Naive thymus-derived CD4-positive, alpha-beta T cell (primary cell): ENCODE measurements at regions of chr3 and their contacts with region 1.

Region 1: DNA sequence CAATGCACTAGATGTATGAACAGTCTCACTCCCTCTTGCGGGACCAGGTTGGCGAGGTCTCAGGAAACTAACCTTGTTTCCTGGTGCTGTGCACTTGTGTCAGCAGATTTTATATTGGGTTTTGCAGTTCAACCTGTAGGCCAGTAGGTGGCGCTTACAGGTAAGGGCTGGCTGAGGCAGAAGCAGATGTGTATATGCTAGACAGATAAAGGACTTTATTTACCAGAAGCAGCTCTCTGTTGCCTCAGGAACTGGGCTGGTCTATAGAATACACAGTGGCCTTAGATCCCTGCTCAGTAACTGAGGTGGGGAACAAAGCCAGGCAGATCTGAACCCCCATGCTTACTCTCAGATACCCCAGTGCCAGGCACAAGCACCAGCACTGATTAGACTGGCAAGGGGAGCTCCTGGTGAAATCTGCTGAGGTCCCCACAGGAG is 296.8 kb downstream of the DOCK3 start:
- DNase-seq: peak in 8 of 9 donors; percentile 37 to 83 (median 78)
- ATAC-seq: peak; percentile 99
- H3K4me3 ChIP-seq: no peak overlapping the region
- H3K4me3 Mint-ChIP-seq: peak overlapping the region in 2 of 10 donors; percentile 15 to 45
- H3K27ac ChIP-seq: no peak overlapping the region
- H3K27ac Mint-ChIP-seq: peak overlapping the region in 7 of 9 donors; percentile 12 to 77 (median 67)
- H3K4me1 ChIP-seq: peaks cover 9 to 14% of the 10 kb centered on the region in 2 donors
- H3K4me1 Mint-ChIP-seq: peaks cover 0 to 21% (median 13%) of the 10 kb centered on the region in 7 donors
- H3K27me3 ChIP-seq: no peaks in the 10 kb centered on the region
- H3K27me3 Mint-ChIP-seq: peaks cover 0 to 3% (median 0%) of the 10 kb centered on the region in 5 donors

Region 2: DNA sequence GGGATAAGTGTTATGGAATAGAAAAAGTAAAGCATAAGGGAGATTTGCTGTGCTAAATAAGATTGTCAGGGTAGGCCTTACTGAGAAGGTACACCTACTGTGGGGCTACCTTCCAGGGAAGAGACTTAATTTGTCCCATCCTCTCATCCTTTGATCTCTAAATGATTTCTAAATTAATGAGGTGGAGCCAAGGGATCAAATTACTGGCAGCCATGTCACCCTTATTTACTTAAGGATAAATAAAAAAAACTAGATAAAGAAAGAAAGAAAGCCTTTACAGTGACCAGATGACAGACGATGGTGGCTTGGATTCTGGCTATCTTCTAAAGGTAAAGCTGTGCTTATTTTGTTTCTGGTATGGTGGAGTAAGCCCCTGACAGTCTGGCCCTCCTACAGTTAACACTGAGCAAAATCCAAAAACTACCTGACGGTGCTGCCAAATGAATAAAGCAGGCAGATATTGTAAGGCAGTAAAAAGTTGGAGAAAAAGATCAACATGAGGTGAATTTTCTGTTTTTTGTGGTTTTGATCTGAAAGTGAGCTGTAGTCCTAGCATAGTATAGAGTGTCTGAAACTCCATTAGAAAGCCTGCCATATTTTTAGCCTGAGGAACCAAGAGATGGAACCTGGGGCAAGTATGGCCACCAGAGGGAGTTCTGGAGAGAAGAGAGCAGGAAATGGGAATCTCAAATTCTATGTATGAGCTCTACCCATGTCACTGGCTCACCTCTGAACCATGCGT is 128.5 kb after region 1 on chr3:
- CTCF ChIA-PET with region 1: interaction called, 8 read pairs
- POLR2A ChIA-PET with region 1: interaction called, 3 read pairs
- intact Hi-C with region 1: loop called in 1 of 2 experiments (anchors 2 kb)
- DNase-seq: peak in 1 of 9 donors; percentile 5
- ATAC-seq: peak; percentile 20
- H3K4me3 ChIP-seq: no peak overlapping the region
- H3K4me3 Mint-ChIP-seq: peak overlapping the region in 1 of 10 donors; percentile 43
- H3K27ac ChIP-seq: no peak overlapping the region
- H3K27ac Mint-ChIP-seq: peak overlapping the region in 3 of 9 donors; percentile 45 to 82 (median 75)
- H3K4me1 ChIP-seq: no peaks in the 10 kb centered on the region
- H3K4me1 Mint-ChIP-seq: peaks cover 3 to 27% (median 16%) of the 10 kb centered on the region in 7 donors
- H3K27me3 ChIP-seq: no peaks in the 10 kb centered on the region
- H3K27me3 Mint-ChIP-seq: peaks cover 0 to 2% (median 0%) of the 10 kb centered on the region in 5 donors

Region 3: DNA sequence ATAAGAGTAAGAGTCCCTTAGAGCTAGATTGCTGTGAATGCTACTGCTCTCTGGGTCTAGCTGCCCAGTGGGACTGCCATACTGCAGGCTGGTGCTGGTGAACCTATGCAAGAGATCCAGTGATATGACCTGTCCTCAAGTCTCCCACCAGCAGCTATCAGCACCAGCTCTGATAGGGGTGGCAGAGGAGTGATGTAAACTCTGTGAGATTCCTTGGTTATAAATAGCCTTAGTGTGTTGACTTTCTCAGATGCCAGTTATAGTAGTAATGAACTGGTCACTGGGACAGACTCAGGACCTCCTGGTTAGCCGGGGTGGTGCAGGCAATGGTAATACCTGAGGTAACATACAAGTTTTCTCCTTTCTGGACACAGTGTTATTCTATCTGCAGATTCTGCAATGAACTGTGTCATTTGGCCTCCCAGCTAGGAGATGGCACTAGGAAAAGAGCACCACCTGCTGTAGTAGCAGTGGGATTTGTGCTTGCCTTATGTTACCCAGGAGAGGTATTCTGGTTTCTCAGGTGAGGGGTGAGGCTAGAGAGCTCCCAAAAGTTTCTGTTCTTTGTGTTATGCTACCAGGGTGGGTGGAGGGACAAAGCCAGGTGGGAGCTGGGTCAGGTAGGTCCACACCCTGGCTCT is 218.8 kb after region 1 on chr3:
- CTCF ChIA-PET with region 1: interaction called, 13 read pairs
- POLR2A ChIA-PET with region 1: no interaction called
- intact Hi-C with region 1: loop called in 1 of 2 experiments (anchors 2 kb)
- DNase-seq: peak in 4 of 9 donors; percentile 5 to 23 (median 8)
- ATAC-seq: no peak
- H3K4me3 ChIP-seq: no peak overlapping the region
- H3K4me3 Mint-ChIP-seq: no peak overlapping the region
- H3K27ac ChIP-seq: no peak overlapping the region
- H3K27ac Mint-ChIP-seq: peak overlapping the region in 1 of 9 donors; percentile 30
- H3K4me1 ChIP-seq: no peaks in the 10 kb centered on the region
- H3K4me1 Mint-ChIP-seq: peaks cover 6 to 45% (median 13%) of the 10 kb centered on the region in 7 donors
- H3K27me3 ChIP-seq: no peaks in the 10 kb centered on the region
- H3K27me3 Mint-ChIP-seq: peaks cover 0 to 3% (median 0%) of the 10 kb centered on the region in 5 donors

Region 4: GRCh38 chr3:51311055-51311454 is 339.5 kb after region 1 on chr3:
- CTCF ChIA-PET with region 1: interaction called, 23 read pairs
- POLR2A ChIA-PET with region 1: no interaction called
- intact Hi-C with region 1: loop called in 1 of 2 experiments (anchors 2 kb)
- DNase-seq: peak in 7 of 9 donors; percentile 4 to 53 (median 39)
- ATAC-seq: peak; percentile 32
- H3K4me3 ChIP-seq: no peak overlapping the region
- H3K4me3 Mint-ChIP-seq: no peak overlapping the region
- H3K27ac ChIP-seq: no peak overlapping the region
- H3K27ac Mint-ChIP-seq: no peak overlapping the region
- H3K4me1 ChIP-seq: no peaks in the 10 kb centered on the region
- H3K4me1 Mint-ChIP-seq: peaks cover 0 to 10% (median 0%) of the 10 kb centered on the region in 7 donors
- H3K27me3 ChIP-seq: peaks cover 0 to 7% of the 10 kb centered on the region in 2 donors
- H3K27me3 Mint-ChIP-seq: no peaks in the 10 kb centered on the region

Region 5: GRCh38 chr3:51434746-51435327 is 463.3 kb after region 1 on chr3:
- CTCF ChIA-PET with region 1: interaction called, 3 read pairs
- POLR2A ChIA-PET with region 1: no interaction called
- intact Hi-C with region 1: loop called in 1 of 2 experiments (anchors 10 kb)
- DNase-seq: peak in 8 of 9 donors; percentile 26 to 64 (median 52)
- ATAC-seq: peak; percentile 90
- H3K4me3 ChIP-seq: no peak overlapping the region
- H3K4me3 Mint-ChIP-seq: no peak overlapping the region
- H3K27ac ChIP-seq: no peak overlapping the region
- H3K27ac Mint-ChIP-seq: peak overlapping the region in 6 of 9 donors; percentile 16 to 59 (median 34)
- H3K4me1 ChIP-seq: no peaks in the 10 kb centered on the region
- H3K4me1 Mint-ChIP-seq: peaks cover 5 to 13% (median 10%) of the 10 kb centered on the region in 7 donors
- H3K27me3 ChIP-seq: no peaks in the 10 kb centered on the region
- H3K27me3 Mint-ChIP-seq: no peaks in the 10 kb centered on the region